ENCODE measurements at regions of chr9 and their contacts with region 1.

Region 1: GRCh38 chr9:77851882-77852595 is 179.6 kb downstream of the GNAQ start:
- DNase-seq: no peak
- ATAC-seq: peak; percentile 42
- H3K4me3 ChIP-seq: no peak overlapping the region
- H3K27ac ChIP-seq: peak overlapping the region; percentile 10 to 64
- H3K4me1 ChIP-seq: peaks cover 16 to 84% of the 10 kb centered on the region in 2 donors
- H3K27me3 ChIP-seq: no peaks in the 10 kb centered on the region
- CTCF ChIP-seq: no peak

Region 2: DNA sequence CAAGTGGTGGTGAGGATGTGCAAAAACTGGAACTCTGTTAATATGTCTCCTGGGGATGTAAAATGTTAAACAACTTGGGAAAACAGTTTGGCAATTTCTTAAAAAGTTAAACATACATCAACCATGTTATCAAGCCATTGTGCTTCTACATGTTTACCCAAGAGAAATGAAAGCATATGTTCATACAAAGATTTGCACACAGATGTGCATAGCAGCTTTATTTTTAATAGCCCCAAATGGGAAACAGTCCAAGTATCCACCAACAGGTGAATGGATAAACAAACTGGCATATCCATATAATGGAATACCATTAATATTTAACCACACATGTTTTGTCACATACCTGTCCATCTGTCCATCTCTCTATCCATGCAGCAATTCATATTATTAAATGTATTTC is 668.5 kb before region 1 on chr9:
- intact Hi-C with region 1: no loop called
- DNase-seq: no peak
- ATAC-seq: no peak
- H3K4me3 ChIP-seq: no peak overlapping the region
- H3K27ac ChIP-seq: no peak overlapping the region
- H3K4me1 ChIP-seq: peaks cover 0 to 9% of the 10 kb centered on the region in 2 donors
- H3K27me3 ChIP-seq: no peaks in the 10 kb centered on the region
- CTCF ChIP-seq: no peak

Region 3: DNA sequence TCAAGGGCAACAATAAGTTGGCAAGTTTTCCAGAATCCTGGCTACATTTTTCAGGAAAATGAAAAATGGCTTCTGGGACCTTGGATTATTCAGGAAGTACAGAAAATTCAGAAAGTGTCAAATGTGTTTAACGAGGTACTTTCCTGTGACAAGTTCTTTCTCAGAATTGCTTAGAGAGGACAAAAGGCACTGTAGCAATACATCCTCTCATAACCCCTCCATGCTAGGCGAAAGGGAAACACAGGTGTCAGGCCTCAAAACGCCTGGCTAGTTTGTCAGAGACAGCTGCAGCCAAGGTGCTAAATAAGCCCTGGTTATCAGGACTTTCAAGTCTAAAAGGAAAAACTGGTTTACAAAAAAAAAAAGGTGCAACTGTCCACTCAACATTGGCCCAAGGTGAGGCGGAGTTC is 64.4 kb after region 1 on chr9:
- intact Hi-C with region 1: loop called in 1 of 2 experiments (anchors 10 kb)
- DNase-seq: no peak
- ATAC-seq: no peak
- H3K4me3 ChIP-seq: no peak overlapping the region
- H3K27ac ChIP-seq: peak overlapping the region in 1 of 2 donors; percentile 16
- H3K4me1 ChIP-seq: peaks cover 0 to 43% of the 10 kb centered on the region in 2 donors
- H3K27me3 ChIP-seq: no peaks in the 10 kb centered on the region
- CTCF ChIP-seq: no peak